Mammary epithelial cell (primary cell): ENCODE measurements at regions of chr5 and their contacts with region 1.

Region 1: GRCh38 chr5:152142840-152143469 is 218.3 kb upstream of the GLRA1 start:
- DNase-seq: peak; percentile 21
- H3K4me3 ChIP-seq: no peak overlapping the region
- H3K27ac ChIP-seq: no peak overlapping the region
- H3K4me1 ChIP-seq: no peaks in the 10 kb centered on the region
- H3K27me3 ChIP-seq: no peaks in the 10 kb centered on the region
- CTCF ChIP-seq: peak; percentile 86 to 95

Region 2: GRCh38 chr5:151924564-151925301 is 218.2 kb before region 1 on chr5 and contains the start of gene GLRA1:
- CTCF ChIA-PET with region 1: no interaction called
- dilution Hi-C with region 1: no loop called
- in situ Hi-C with region 1: no loop called
- intact Hi-C with region 1: loop called (anchors 1 kb)
- DNase-seq: peak; percentile 25
- H3K4me3 ChIP-seq: no peak within 1 kb of the TSS
- H3K27ac ChIP-seq: no peak within 1 kb of the TSS
- H3K4me1 ChIP-seq: no peaks in the 10 kb centered on the region
- H3K27me3 ChIP-seq: no peaks in the 10 kb centered on the region
- CTCF ChIP-seq: no peak
- total RNA-seq, gene GLRA1: not detected

Region 3: DNA sequence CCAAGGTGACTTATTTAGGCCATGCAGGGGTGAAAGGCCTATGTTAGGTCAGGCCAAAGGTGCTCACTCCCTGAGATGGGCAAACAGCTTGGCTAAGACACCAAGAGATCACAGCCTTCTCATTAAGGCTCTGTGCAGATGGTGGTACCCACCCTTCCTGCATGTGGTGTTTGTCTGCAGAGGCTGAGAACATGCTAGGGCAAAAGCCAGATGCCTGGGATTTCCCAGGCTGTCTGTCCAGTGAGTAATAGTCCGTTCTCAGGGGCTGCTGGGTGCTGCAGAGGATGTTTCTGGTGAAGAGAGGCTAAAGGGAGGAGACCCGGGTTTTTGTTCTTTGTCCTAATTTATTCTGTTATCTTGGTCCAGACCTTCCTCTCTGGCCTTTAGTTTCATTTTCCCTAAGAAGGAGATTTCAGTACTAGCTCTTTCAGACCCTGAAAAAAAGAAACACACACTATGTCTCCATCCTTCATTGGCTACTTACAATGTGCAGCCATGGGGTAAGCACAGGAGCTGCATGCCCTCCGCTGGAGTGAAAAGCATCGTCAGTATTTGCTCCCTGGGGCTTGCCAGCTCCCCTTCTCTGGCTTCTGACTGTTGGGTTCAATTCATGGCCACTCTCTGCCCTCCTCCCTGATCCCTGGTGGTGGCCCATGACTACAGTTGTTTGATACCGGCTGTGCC is 194.9 kb before region 1 on chr5:
- CTCF ChIA-PET with region 1: no interaction called
- dilution Hi-C with region 1: no loop called
- in situ Hi-C with region 1: no loop called
- intact Hi-C with region 1: no loop called
- DNase-seq: peak; percentile 81
- H3K4me3 ChIP-seq: no peak overlapping the region
- H3K27ac ChIP-seq: no peak overlapping the region
- H3K4me1 ChIP-seq: peaks cover 32% of the 10 kb centered on the region
- H3K27me3 ChIP-seq: no peaks in the 10 kb centered on the region
- CTCF ChIP-seq: no peak

Region 4: DNA sequence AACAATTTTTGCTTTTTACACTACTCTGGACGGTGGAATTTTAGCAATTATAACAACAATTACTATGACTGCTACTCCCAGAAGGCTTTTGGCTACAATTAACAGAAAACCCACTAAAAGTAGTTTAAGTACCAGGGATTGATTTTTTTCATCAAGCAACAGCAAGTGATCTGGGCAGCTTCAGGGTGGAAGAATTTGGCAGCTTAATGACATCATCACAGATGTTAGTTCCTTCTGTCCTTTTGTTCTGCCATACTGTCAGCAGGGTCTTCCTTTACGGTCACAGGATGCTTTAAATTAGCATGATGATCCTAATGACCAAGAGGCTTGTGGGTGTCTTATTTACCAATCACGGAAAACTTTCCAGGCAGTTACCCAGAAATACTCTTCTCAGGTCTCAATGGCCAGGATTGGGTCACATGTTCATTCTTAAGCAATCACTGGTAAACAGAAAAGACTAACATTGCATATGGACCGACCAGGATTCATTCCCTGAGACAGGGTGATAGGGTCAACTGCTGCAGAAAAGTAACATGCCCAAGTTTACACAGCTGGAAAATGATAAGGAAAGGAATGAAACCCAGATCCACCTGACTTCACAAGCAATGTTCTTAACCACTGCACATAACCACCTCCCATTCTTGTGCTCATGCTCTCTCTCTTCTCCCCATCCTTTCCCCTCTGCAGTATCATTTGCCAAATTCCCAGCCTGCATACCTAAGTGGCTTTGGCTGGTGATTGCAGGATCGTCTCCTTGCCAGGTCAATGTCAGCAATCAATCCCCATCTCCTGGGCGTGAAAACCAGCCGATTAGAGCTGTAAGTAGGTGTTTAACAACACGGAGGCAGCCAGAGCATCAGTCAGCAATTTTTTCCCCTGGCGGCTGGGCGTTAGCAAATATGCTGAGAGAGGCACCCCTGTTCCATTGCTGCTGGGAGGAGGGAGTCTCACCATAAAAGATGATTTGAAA is 42.6 kb after region 1 on chr5:
- CTCF ChIA-PET with region 1: no interaction called
- dilution Hi-C with region 1: no loop called
- in situ Hi-C with region 1: no loop called
- intact Hi-C with region 1: no loop called
- DNase-seq: no peak
- H3K4me3 ChIP-seq: no peak overlapping the region
- H3K27ac ChIP-seq: no peak overlapping the region
- H3K4me1 ChIP-seq: no peaks in the 10 kb centered on the region
- H3K27me3 ChIP-seq: no peaks in the 10 kb centered on the region
- CTCF ChIP-seq: no peak

Region 5: DNA sequence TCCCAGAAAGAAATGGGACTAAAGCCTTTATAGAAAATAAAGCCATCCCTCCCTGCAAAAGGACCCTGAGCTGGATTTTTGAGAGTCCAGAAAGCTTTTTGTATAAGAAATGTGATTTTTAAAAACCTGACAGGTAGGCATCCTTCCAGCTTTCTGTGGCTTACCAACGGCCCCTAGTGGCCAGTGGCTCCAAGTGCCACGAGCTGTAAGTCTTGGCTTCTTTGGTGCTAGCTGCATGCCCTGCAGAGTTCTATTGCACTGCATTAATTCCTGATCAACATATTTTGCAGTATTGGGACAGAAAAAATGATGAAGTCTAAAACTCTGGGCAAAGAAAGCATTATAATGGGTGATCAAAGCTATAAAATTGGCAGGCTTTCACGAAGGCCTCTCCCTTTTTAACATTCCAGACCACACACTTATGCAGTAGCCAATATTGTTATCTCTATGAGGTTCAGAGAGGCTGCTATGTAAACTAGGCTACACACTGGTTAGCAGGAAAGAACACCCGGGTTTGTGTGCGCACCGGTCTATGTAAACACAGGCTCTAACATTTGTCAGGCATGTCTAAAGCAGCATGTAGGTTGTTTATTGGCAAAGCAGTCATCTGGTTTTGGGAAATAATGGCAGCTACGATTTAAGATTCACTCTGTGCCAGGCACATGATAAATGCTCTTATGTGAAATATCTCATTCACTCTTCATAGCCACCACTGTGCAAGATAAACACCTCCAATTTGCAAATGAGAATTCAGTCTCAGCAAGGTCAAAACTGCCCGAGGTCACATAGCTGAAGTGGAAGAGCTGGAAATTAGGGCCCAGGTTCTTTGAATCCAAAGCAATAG is 206.9 kb after region 1 on chr5:
- CTCF ChIA-PET with region 1: no interaction called
- dilution Hi-C with region 1: no loop called
- in situ Hi-C with region 1: no loop called
- intact Hi-C with region 1: loop called (anchors 5 kb)
- DNase-seq: peak; percentile 24
- H3K4me3 ChIP-seq: no peak overlapping the region
- H3K27ac ChIP-seq: no peak overlapping the region
- H3K4me1 ChIP-seq: no peaks in the 10 kb centered on the region
- H3K27me3 ChIP-seq: no peaks in the 10 kb centered on the region
- CTCF ChIP-seq: peak; percentile 94 to 97

Region 6: DNA sequence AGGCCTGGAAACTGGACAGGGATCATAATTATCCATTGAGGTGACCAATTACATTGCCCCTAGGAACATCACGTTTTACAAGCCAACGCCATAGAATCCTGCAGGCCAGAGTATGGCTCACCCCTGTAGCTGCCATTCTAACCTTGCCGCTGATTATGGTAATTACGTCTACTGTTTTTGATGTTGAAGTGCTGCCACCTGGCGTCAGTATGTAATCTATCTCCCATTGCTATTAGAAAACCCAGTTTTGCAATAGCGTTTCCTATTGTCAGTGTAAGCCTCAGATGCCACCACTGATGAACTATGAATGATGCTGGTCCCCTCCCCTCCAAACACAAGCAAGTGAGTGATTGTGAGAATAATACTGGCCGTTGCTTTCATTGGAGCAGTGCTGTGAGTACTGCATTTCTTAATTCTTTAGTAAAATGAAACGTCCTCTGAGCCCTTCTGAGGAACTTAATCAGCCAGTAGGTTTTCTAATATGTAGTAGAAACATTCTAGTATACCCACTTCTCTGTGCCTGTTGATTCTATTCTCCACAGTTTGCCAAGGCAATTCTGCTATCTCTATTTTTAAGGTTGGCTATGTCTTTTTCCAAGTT is 362.6 kb after region 1 on chr5:
- CTCF ChIA-PET with region 1: no interaction called
- dilution Hi-C with region 1: no loop called
- in situ Hi-C with region 1: no loop called
- intact Hi-C with region 1: loop called (anchors 10 kb)
- DNase-seq: peak; percentile 51
- H3K4me3 ChIP-seq: no peak overlapping the region
- H3K27ac ChIP-seq: no peak overlapping the region
- H3K4me1 ChIP-seq: no peaks in the 10 kb centered on the region
- H3K27me3 ChIP-seq: no peaks in the 10 kb centered on the region
- CTCF ChIP-seq: peak; percentile 56 to 67